Spleen (tissue), 13 donors: ENCODE measurements at regions of chr19 and their contacts with region 1.

Region 1: DNA sequence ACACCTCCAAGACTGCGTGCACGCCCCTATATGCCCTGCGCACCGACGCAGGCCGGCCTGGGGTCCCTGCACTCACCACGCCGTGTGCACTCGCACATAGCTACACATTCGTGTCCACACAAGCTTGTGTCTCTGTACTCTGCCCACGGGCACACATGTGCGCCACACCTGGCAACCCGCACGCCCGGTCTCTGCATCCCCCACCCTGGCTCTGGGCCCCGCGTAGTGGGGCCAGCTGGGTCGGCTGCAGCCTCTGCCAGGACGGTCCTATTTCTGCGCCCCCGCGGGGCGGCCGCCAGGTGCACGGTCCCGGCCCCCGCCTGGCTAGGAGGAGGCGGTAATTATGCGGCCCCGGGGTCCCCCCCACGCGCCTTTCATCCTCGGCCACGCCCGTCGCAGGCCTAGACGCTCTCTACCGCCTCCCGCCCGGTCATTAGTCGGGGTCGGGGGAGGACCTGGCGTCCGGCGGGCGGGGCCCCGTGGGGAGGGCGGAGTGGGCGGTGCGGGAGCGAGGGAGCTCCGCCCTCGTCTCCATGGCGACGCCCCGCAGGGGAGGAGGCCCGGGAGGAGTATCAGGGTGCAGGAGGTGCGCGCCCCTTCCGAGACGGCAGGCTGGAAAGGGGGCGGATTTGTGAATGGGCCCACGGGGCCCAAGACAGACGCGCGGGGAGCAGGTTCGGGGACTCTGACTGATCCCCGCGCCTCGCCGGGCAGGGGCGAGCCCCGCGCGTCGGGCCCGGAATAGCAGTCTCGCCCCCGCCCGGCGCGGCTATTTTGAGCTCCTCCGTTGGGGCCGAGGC is 2.8 kb upstream of the CIRBP start:
- DNase-seq: peak; percentile 98
- H3K4me3 ChIP-seq: peak overlapping the region; percentile 47 to 90 (median 58)
- H3K27ac ChIP-seq: peak overlapping the region; percentile 74 to 100 (median 92)
- H3K4me1 ChIP-seq: peaks cover 72 to 96% (median 94%) of the 10 kb centered on the region in 6 donors
- H3K27me3 ChIP-seq: no peaks in the 10 kb centered on the region
- CTCF ChIP-seq: no peak
- POLR2A ChIP-seq: no peak

Region 2: GRCh38 chr19:1243761-1244692 is 22.3 kb before region 1 on chr19:
- intact Hi-C with region 1: loop called (anchors 2 kb)
- DNase-seq: peak; percentile 97
- H3K4me3 ChIP-seq: peak overlapping the region in 5 of 8 donors; percentile 9 to 61 (median 21)
- H3K27ac ChIP-seq: peak overlapping the region; percentile 45 to 100 (median 94)
- H3K4me1 ChIP-seq: peaks cover 52 to 94% (median 83%) of the 10 kb centered on the region in 6 donors
- H3K27me3 ChIP-seq: peaks cover 0 to 14% (median 0%) of the 10 kb centered on the region in 7 donors
- CTCF ChIP-seq: peak; percentile 87 to 99 (median 97)
- POLR2A ChIP-seq: no peak

Region 3: GRCh38 chr19:1324806-1325567 is 58.7 kb after region 1 on chr19:
- intact Hi-C with region 1: no loop called
- DNase-seq: no peak
- H3K4me3 ChIP-seq: peak overlapping the region in 6 of 8 donors; percentile 2 to 58 (median 18)
- H3K27ac ChIP-seq: peak overlapping the region in 4 of 8 donors; percentile 6 to 50 (median 42)
- H3K4me1 ChIP-seq: peaks cover 5 to 20% (median 11%) of the 10 kb centered on the region in 6 donors
- H3K27me3 ChIP-seq: peaks cover 3 to 84% (median 33%) of the 10 kb centered on the region in 7 donors
- CTCF ChIP-seq: no peak
- POLR2A ChIP-seq: no peak